CD4-positive, alpha-beta memory T cell (primary cell): ENCODE measurements at regions of chr2 and their contacts with region 1.

Region 1: GRCh38 chr2:100643906-100644501 is 81.2 kb downstream of the PDCL3 start:
- DNase-seq: peak; percentile 71 to 83 (median 80)
- H3K4me3 ChIP-seq: peak overlapping the region; percentile 13 to 41
- H3K4me3 Mint-ChIP-seq: peak overlapping the region; percentile 56 to 86 (median 76)
- H3K27ac ChIP-seq: no peak overlapping the region
- H3K27ac Mint-ChIP-seq: peak overlapping the region; percentile 69 to 89 (median 77)
- H3K4me1 ChIP-seq: peaks cover 60% of the 10 kb centered on the region
- H3K4me1 Mint-ChIP-seq: peaks cover 37 to 74% (median 54%) of the 10 kb centered on the region in 4 donors
- H3K27me3 ChIP-seq: no peaks in the 10 kb centered on the region
- H3K27me3 Mint-ChIP-seq: no peaks in the 10 kb centered on the region

Region 2: GRCh38 chr2:99998651-99999320 is 645.2 kb before region 1 on chr2:
- CTCF ChIA-PET with region 1: no interaction called
- POLR2A ChIA-PET with region 1: no interaction called
- intact Hi-C with region 1: no loop called
- DNase-seq: no peak
- H3K4me3 ChIP-seq: no peak overlapping the region
- H3K4me3 Mint-ChIP-seq: no peak overlapping the region
- H3K27ac ChIP-seq: no peak overlapping the region
- H3K27ac Mint-ChIP-seq: no peak overlapping the region
- H3K4me1 ChIP-seq: no peaks in the 10 kb centered on the region
- H3K4me1 Mint-ChIP-seq: peaks cover 1 to 20% (median 8%) of the 10 kb centered on the region in 4 donors
- H3K27me3 ChIP-seq: no peaks in the 10 kb centered on the region
- H3K27me3 Mint-ChIP-seq: no peaks in the 10 kb centered on the region

Region 3: GRCh38 chr2:100630473-100630977 is 13.5 kb before region 1 on chr2:
- CTCF ChIA-PET with region 1: interaction called, 11 read pairs
- POLR2A ChIA-PET with region 1: interaction called, 10 read pairs
- intact Hi-C with region 1: no loop called
- DNase-seq: no peak
- H3K4me3 ChIP-seq: no peak overlapping the region
- H3K4me3 Mint-ChIP-seq: peak overlapping the region in 4 of 8 donors; percentile 17 to 49 (median 31)
- H3K27ac ChIP-seq: no peak overlapping the region
- H3K27ac Mint-ChIP-seq: peak overlapping the region in 3 of 7 donors; percentile 38 to 68 (median 55)
- H3K4me1 ChIP-seq: peaks cover 23% of the 10 kb centered on the region
- H3K4me1 Mint-ChIP-seq: peaks cover 21 to 35% (median 24%) of the 10 kb centered on the region in 4 donors
- H3K27me3 ChIP-seq: no peaks in the 10 kb centered on the region
- H3K27me3 Mint-ChIP-seq: no peaks in the 10 kb centered on the region